HEK293T (cell line): ENCODE measurements at regions of chr16 and their contacts with region 1.

Region 1: GRCh38 chr16:85821441-85822135 is 22.1 kb downstream of the COX4I1 start:
- DNase-seq: peak; percentile 86

Region 2: DNA sequence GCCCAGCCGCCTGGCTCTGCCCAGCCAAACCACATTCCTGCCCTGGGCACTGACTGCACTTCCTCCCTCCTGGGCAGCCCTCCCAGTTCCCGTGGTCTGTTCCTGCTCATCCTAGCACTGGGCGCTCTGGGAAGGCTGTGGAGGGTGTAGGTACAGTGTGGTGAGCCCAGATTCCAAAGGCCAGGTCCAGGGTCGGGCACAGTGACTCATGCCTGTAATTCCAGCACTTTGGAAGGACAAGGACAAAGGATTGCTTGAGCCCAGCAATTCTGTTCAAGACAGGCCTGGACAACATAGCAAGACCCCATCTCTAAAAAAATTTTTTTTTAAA is 101.3 kb before region 1 on chr16:
- CTCF ChIA-PET with region 1: no interaction called
- POLR2A ChIA-PET with region 1: no interaction called
- DNase-seq: no peak

Region 3: DNA sequence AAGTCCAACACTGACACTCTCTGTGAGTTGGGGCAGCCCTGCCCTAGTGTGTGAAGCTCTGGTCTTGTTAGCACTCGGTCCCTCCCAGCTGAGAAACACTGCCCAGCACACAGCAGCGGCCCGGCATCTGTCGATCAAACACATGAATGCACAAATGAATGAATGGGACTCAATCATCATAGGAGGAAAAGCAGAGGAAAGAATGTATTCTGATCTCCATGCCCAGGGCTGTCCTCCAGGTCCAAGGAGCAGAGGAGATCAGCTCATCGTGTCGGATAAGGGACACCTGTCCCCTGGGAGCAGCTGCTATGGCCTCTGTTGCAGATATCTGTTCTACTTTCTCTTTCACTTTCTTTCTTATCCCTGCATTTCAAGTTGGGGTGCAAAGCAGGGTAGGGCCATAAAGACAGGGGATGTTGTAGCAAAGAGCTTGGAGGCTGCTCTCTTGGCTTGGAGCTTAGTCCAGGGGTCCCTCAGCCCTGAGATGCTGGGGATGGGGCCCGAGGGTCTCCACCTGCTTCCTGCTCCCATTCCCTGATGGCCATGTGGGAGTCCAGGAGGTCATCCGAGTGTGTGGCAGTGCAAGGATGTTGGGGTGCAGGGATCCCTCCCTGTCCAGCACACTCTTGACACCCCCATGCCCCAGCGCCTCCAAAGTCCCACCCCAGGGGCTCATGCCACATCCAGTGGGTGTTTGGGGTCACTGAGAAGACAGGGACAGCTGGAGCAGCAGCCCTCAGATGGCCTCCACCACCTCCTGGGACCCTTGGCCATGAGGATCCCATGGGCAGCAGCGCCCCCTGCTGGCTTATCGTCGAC is 165.6 kb after region 1 on chr16:
- CTCF ChIA-PET with region 1: interaction called, 45 read pairs
- POLR2A ChIA-PET with region 1: interaction called, 4 read pairs
- DNase-seq: peak; percentile 83

Region 4: DNA sequence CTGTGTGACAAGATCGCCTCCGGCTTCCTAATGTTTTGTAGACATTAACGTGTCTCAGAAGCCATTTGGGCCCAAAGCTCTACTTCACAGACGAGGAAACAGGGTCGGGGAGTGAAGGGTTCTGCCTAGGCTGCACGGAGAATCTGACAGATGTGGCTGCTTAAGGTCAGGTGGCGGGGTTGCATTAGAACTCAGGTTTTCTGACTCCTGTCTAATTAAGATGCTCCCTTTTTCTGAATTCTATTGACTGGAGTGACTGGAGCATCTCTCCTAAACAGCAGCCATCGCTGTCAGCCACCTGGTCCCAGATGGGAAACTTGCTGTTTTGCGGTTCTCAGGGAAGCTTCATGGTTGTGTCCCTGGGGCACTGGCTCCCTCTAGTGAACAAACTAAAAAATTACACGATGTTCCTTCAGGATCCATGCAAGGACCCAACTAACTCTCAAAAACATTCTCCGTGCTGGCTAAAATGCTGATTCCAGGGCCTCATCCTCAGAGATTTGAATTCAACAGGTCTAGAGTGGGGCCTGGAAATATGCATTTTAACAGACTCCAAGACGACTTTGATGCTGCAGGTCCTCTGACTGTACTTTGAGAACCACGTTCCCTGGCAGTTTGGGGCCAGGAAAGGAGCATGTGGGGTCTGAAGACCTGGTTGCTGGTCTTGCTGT is 194.7 kb after region 1 on chr16:
- CTCF ChIA-PET with region 1: interaction called, 26 read pairs
- POLR2A ChIA-PET with region 1: no interaction called
- DNase-seq: peak; percentile 73

Region 5: DNA sequence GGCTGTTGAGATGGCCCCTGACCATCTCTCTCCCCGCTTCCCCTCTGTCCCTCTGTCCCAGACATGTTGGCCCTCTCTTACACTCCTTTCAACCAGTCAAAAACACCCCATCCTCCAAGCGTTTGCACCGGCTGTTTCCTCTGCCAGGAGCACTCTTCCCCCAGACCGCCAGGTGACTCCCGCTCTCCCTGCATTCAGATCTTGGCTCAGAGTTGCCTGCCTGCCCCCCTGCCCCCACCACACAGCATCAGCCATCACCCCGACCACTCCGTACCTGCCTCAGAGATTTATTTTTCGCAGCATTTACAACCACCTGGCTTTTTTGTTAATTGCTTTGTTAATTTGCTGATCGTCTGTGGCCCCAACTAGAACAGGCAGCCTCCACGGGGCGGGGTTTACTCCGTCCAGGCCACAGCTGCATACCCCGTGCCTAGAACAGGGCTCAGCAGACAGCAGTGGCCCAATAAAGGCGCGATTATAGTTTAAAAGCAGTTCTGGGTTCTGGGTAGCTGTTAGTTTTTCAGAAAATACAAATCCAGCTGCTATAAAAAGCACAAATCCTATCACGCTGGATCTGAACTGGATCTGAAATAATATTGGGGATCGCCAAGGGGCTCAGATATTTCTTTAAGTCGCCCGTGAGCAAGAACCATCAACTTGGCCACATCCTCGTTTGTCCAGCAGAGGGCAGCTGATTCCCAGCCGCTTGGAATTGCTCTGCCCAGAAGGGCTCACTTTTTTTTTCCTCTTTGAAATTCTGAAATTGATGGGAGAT is 250.9 kb after region 1 on chr16:
- CTCF ChIA-PET with region 1: interaction called, 11 read pairs
- POLR2A ChIA-PET with region 1: no interaction called
- DNase-seq: peak; percentile 72